ENCODE measurements at regions of chr3 and their contacts with region 1.

Region 1: GRCh38 chr3:184811999-184812661 is at the start of gene VPS8:
- DNase-seq: peak; percentile 97
- H3K4me3 ChIP-seq: peak within 1 kb of the TSS; percentile 89
- H3K27ac ChIP-seq: peak within 1 kb of the TSS; percentile 23
- H3K4me1 ChIP-seq: peaks cover 27% of the 10 kb centered on the region
- CTCF ChIP-seq: 0 out of 2 replicates have a peak, but pooled peaks have one; percentile 50
- total RNA-seq, gene VPS8: 33.5 and 38.6 TPM in 2 replicates

Region 2: DNA sequence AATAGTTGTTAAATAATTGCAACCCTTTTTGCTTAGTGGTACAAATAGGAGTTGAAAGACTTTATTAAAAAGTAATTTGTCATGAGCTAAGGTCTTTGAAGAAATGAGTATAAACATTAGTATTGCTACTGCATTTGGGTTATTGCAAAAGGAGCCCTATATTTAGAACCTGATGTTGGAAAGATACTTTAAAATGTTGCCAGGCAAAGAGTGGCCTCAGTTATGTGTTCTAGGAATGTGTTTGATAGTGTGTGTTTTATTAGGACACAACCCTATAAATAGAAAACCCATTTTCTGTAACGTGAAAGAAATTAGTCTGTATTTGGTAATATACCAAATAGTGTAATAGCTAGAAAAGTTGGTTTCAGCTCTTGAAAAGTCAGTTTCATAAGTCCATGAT is 10.5 kb after region 1 on chr3:
- CTCF ChIA-PET with region 1: no interaction called
- POLR2A ChIA-PET with region 1: interaction called, 21 read pairs
- intact Hi-C with region 1: no loop called
- DNase-seq: no peak
- H3K4me3 ChIP-seq: no peak overlapping the region
- H3K27ac ChIP-seq: no peak overlapping the region
- H3K4me1 ChIP-seq: no peaks in the 10 kb centered on the region
- CTCF ChIP-seq: no peak